ENCODE measurements at regions of chr20 and their contacts with region 1.

Region 1: GRCh38 chr20:35942243-35942642 is 12.1 kb downstream of the SCAND1 start:
- DNase-seq: no peak
- H3K4me3 ChIP-seq: no peak overlapping the region
- CTCF ChIP-seq: no peak
- POLR2A ChIP-seq: no peak

Region 2: GRCh38 chr20:35901678-35902544 is 40.3 kb before region 1 on chr20:
- intact Hi-C with region 1: loop called (anchors 1 kb)
- DNase-seq: no peak
- H3K4me3 ChIP-seq: no peak overlapping the region
- CTCF ChIP-seq: no peak
- POLR2A ChIP-seq: no peak

Region 3: DNA sequence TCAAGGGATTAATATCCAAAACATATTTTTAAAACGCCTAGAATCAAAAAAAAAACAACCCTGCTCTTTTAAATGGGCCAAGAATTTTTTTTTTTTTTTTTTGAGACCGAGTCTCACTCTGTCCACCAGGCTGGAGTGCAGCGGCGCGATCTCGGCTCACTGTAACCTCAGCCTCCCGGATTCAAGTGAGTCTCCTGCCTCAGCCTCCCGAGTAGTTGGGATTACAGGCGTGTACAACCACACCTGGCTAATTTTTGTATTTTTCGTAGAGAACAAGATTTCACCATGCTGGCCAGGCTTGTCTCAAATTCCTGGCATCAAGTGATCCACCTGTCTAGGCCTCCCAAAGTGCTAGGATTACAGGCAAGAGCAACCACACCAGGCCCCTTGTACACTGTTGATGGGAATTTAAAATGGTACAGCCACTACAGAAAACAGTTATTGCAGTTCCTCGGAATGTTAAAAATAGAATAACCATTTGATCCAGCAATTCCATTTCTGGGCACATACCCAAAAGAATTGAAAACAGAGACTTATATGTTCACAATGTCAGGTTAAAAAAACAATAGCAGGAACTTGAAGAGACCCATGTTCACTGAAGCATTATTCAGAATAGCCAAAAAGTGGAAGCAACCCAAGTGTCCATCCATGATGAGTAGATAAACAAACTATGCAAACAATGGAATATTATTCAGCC is 595.9 kb after region 1 on chr20:
- intact Hi-C with region 1: no loop called
- DNase-seq: no peak
- H3K4me3 ChIP-seq: no peak overlapping the region
- CTCF ChIP-seq: no peak
- POLR2A ChIP-seq: no peak